ENCODE measurements at regions of chr19 and their contacts with region 1.

Region 1: GRCh38 chr19:5321851-5322681 is 18.5 kb downstream of the PTPRS start:
- DNase-seq: no peak
- H3K4me3 ChIP-seq: no peak overlapping the region
- H3K27ac ChIP-seq: no peak overlapping the region
- H3K4me1 ChIP-seq: no peaks in the 10 kb centered on the region
- H3K27me3 ChIP-seq: no peaks in the 10 kb centered on the region
- CTCF ChIP-seq: no peak

Region 2: DNA sequence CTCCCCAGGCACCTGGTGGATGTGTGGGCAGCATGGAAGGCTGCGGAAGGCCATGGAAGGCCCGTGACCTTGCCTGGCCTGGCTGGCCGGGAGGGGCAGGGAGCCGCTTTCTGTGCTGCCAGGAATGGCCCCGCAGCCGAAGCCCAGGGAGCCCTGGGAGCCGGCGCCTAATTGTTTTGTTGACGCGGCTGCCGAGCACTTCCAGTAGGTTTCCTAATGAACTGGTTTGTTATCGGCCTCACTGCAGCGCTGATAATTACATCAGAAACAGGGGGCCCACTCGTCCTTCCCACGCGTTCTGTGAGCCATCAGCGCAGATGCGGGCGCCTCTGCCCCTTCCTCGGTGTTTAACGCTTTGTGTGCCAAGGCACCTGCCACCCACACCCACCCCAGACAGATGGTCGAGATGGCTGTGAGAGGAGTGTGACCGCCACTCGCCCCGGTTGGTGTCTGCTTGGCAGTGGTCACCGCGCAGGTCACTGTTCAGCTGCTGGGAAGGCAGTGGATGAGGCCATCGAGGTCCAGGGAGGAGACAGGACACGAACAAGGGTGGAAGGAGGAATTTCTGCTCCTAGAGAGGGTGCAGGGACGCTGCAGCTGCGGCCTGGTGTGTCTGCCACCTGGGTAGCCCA is 228.7 kb before region 1 on chr19:
- CTCF ChIA-PET with region 1: no interaction called
- POLR2A ChIA-PET with region 1: no interaction called
- intact Hi-C with region 1: no loop called
- DNase-seq: no peak
- H3K4me3 ChIP-seq: no peak overlapping the region
- H3K27ac ChIP-seq: no peak overlapping the region
- H3K4me1 ChIP-seq: no peaks in the 10 kb centered on the region
- H3K27me3 ChIP-seq: no peaks in the 10 kb centered on the region
- CTCF ChIP-seq: no peak

Region 3: GRCh38 chr19:5290336-5291262 is 31.5 kb before region 1 on chr19:
- CTCF ChIA-PET with region 1: interaction called, 4 read pairs
- POLR2A ChIA-PET with region 1: interaction called, 11 read pairs
- intact Hi-C with region 1: no loop called
- DNase-seq: no peak
- H3K4me3 ChIP-seq: no peak overlapping the region
- H3K27ac ChIP-seq: no peak overlapping the region
- H3K4me1 ChIP-seq: 0 out of 2 replicates have a peak, but pooled peaks cover 7% of the 10 kb centered on the region
- H3K27me3 ChIP-seq: no peaks in the 10 kb centered on the region
- CTCF ChIP-seq: no peak